ENCODE measurements at regions of chrX and their contacts with region 1.

Region 1: GRCh38 chrX:11143931-11144678 is 33.0 kb downstream of the HCCS start:
- DNase-seq: peak; percentile 42
- ATAC-seq: peak; percentile 99
- H3K4me3 ChIP-seq: no peak overlapping the region
- H3K27ac ChIP-seq: no peak overlapping the region
- H3K4me1 ChIP-seq: no peaks in the 10 kb centered on the region
- H3K27me3 ChIP-seq: no peaks in the 10 kb centered on the region
- CTCF ChIP-seq: peak; percentile 54 to 70 (median 56)
- EP300 ChIP-seq: no peak
- POLR2A ChIP-seq: no peak
- RAD21 ChIP-seq: peak; percentile 85

Region 2: DNA sequence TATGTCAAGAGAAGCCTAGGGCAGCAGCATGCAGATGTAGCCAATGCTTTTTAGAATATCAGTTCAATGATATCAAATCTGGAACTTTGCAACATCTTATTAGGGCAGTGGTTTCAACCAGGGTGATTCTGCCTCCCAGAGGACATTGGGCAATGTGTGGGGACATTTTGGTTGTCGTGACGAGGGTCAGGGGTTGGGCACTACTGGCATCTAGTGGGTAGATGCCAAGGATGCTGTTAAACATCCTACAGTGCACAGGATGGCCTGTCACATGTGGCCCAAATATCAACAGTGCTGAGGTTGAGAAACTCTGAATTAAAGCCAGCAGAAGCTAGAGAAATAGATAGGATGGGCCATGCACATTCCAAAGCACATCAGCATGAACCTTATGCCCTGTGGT is 301.4 kb after region 1 on chrX:
- CTCF ChIA-PET with region 1: no interaction called
- POLR2A ChIA-PET with region 1: no interaction called
- RAD21 ChIA-PET with region 1: no interaction called
- SMC1A ChIA-PET with region 1: no interaction called
- in situ Hi-C with region 1: no loop called
- intact Hi-C with region 1: loop called (anchors 5 kb)
- DNase-seq: no peak
- ATAC-seq: peak; percentile 72
- H3K4me3 ChIP-seq: no peak overlapping the region
- H3K27ac ChIP-seq: no peak overlapping the region
- H3K4me1 ChIP-seq: no peaks in the 10 kb centered on the region
- H3K27me3 ChIP-seq: no peaks in the 10 kb centered on the region; a peak in 2 of 4 replicates
- CTCF ChIP-seq: peak in 1 of 3 experiments; percentile 18; a peak in 2 of 6 replicates
- EP300 ChIP-seq: no peak
- POLR2A ChIP-seq: no peak
- RAD21 ChIP-seq: no peak

Measured in GM12878 (cell line).